ENCODE measurements at regions of chr10 and their contacts with region 1.

Region 1: GRCh38 chr10:3482200-3483138 is 302.5 kb downstream of the KLF6 start:
- DNase-seq: peak in 2 of 5 donors; percentile 32 to 54
- ATAC-seq: peak; percentile 63 to 81 (median 76)
- H3K4me3 ChIP-seq: peak overlapping the region in 4 of 12 donors; percentile 15 to 26 (median 22)
- H3K27ac ChIP-seq: peak overlapping the region in 7 of 12 donors; percentile 8 to 66 (median 28)
- H3K4me1 ChIP-seq: peaks cover 5 to 34% (median 19%) of the 10 kb centered on the region in 12 donors
- H3K27me3 ChIP-seq: no peaks in the 10 kb centered on the region
- CTCF ChIP-seq: no peak
- POLR2A ChIP-seq: no peak

Region 2: GRCh38 chr10:3500408-3500856 is 18.0 kb after region 1 on chr10:
- intact Hi-C with region 1: loop called in 1 of 10 experiments (anchors 2 kb)
- DNase-seq: peak; percentile 68 to 91 (median 71)
- ATAC-seq: peak; percentile 92 to 96 (median 94)
- H3K4me3 ChIP-seq: no peak overlapping the region
- H3K27ac ChIP-seq: peak overlapping the region in 10 of 12 donors; percentile 3 to 75 (median 46)
- H3K4me1 ChIP-seq: peaks cover 0 to 24% (median 5%) of the 10 kb centered on the region in 12 donors
- H3K27me3 ChIP-seq: no peaks in the 10 kb centered on the region
- CTCF ChIP-seq: no peak
- POLR2A ChIP-seq: no peak

Region 3: DNA sequence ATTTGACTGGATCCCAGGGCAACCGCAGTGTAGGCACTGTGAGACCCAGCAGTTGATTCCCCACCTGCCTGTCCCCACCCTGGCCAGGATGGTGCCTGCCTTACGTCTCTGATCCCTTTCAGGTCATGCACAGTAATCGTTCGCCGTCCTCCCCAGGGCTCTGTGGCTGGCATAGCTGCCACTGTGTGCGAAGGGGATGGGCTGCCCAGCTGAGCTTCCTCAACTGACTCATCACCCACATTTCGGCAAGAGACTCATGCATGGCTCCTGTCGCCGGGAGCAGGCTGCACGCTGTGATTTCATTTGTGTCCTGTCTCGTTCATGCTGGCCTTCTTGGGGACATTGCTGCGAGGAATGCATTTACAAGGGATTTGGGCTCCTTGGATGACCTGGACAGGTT is 50.2 kb after region 1 on chr10:
- intact Hi-C with region 1: loop called in 1 of 10 experiments (anchors 5 kb)
- DNase-seq: no peak
- ATAC-seq: no peak
- H3K4me3 ChIP-seq: no peak overlapping the region
- H3K27ac ChIP-seq: no peak overlapping the region
- H3K4me1 ChIP-seq: peaks cover 0 to 22% (median 11%) of the 10 kb centered on the region in 12 donors
- H3K27me3 ChIP-seq: no peaks in the 10 kb centered on the region
- CTCF ChIP-seq: no peak
- POLR2A ChIP-seq: no peak

Measured in heart left ventricle (tissue), 16 donors.